Naive thymus-derived CD4-positive, alpha-beta T cell (primary cell): ENCODE measurements at regions of chr2 and their contacts with region 1.

Region 1: GRCh38 chr2:74458132-74458925 is at the start of gene WBP1:
- DNase-seq: peak in 8 of 9 donors; percentile 85 to 100 (median 100)
- ATAC-seq: peak; percentile 89
- H3K4me3 ChIP-seq: peak within 1 kb of the TSS; percentile 70
- H3K4me3 Mint-ChIP-seq: peak within 1 kb of the TSS; percentile 87 to 99 (median 96)
- H3K27ac ChIP-seq: peak within 1 kb of the TSS; percentile 100
- H3K27ac Mint-ChIP-seq: peak within 1 kb of the TSS; percentile 88 to 100 (median 99)
- H3K4me1 ChIP-seq: peaks cover 30 to 34% of the 10 kb centered on the region in 2 donors
- H3K4me1 Mint-ChIP-seq: peaks cover 38 to 68% (median 58%) of the 10 kb centered on the region in 7 donors
- H3K27me3 ChIP-seq: no peaks in the 10 kb centered on the region
- H3K27me3 Mint-ChIP-seq: peaks cover 0 to 2% (median 0%) of the 10 kb centered on the region in 5 donors
- total RNA-seq, gene WBP1: 53.6 to 127 (median 85.4) TPM

Region 2: GRCh38 chr2:73736855-73737779 is 721.2 kb before region 1 on chr2 and contains the start of gene TPRKB:
- CTCF ChIA-PET with region 1: no interaction called
- POLR2A ChIA-PET with region 1: interaction called, 7 read pairs
- intact Hi-C with region 1: loop called (anchors 1 kb)
- DNase-seq: peak; percentile 73 to 95 (median 94)
- ATAC-seq: peak; percentile 99
- H3K4me3 ChIP-seq: peak within 1 kb of the TSS; percentile 78
- H3K4me3 Mint-ChIP-seq: peak within 1 kb of the TSS; percentile 92 to 98 (median 98)
- H3K27ac ChIP-seq: peak within 1 kb of the TSS; percentile 67
- H3K27ac Mint-ChIP-seq: peak within 1 kb of the TSS; percentile 85 to 97 (median 91)
- H3K4me1 ChIP-seq: peaks cover 8 to 14% of the 10 kb centered on the region in 2 donors
- H3K4me1 Mint-ChIP-seq: peaks cover 10 to 31% (median 21%) of the 10 kb centered on the region in 7 donors
- H3K27me3 ChIP-seq: no peaks in the 10 kb centered on the region
- H3K27me3 Mint-ChIP-seq: peaks cover 0 to 2% (median 0%) of the 10 kb centered on the region in 5 donors
- total RNA-seq, gene TPRKB: 16.5 to 34.6 (median 27.5) TPM

Region 3: GRCh38 chr2:74178201-74179062 is 279.9 kb before region 1 on chr2 and contains the start of gene MOB1A:
- CTCF ChIA-PET with region 1: no interaction called
- POLR2A ChIA-PET with region 1: interaction called, 4 read pairs
- intact Hi-C with region 1: loop called in 1 of 2 experiments (anchors 1 kb)
- DNase-seq: peak; percentile 94 to 98 (median 97)
- ATAC-seq: peak; percentile 97
- H3K4me3 ChIP-seq: peak within 1 kb of the TSS; percentile 89
- H3K4me3 Mint-ChIP-seq: peak within 1 kb of the TSS; percentile 86 to 95 (median 91)
- H3K27ac ChIP-seq: peak within 1 kb of the TSS; percentile 97
- H3K27ac Mint-ChIP-seq: peak within 1 kb of the TSS; percentile 82 to 95 (median 90)
- H3K4me1 ChIP-seq: peaks cover 25 to 37% of the 10 kb centered on the region in 2 donors
- H3K4me1 Mint-ChIP-seq: peaks cover 32 to 46% (median 35%) of the 10 kb centered on the region in 7 donors
- H3K27me3 ChIP-seq: no peaks in the 10 kb centered on the region
- H3K27me3 Mint-ChIP-seq: no peaks in the 10 kb centered on the region
- total RNA-seq, gene MOB1A: 113 to 185 (median 140) TPM

Region 4: GRCh38 chr2:74421221-74421870 is 37.0 kb before region 1 on chr2 and contains the starts of genes C2orf81 and WDR54:
- CTCF ChIA-PET with region 1: no interaction called
- POLR2A ChIA-PET with region 1: interaction called, 23 read pairs
- intact Hi-C with region 1: loop called (anchors 1 kb)
- DNase-seq: peak; percentile 86 to 96 (median 95)
- ATAC-seq: peak; percentile 97
- H3K4me3 ChIP-seq: peak within 1 kb of the TSS; percentile 96
- H3K4me3 Mint-ChIP-seq: peak within 1 kb of the TSS; percentile 90 to 100 (median 98)
- H3K27ac ChIP-seq: peak within 1 kb of the TSS; percentile 97
- H3K27ac Mint-ChIP-seq: peak within 1 kb of the TSS; percentile 96 to 100 (median 99)
- H3K4me1 ChIP-seq: peaks cover 4 to 19% of the 10 kb centered on the region in 2 donors
- H3K4me1 Mint-ChIP-seq: peaks cover 14 to 44% (median 36%) of the 10 kb centered on the region in 7 donors
- H3K27me3 ChIP-seq: no peaks in the 10 kb centered on the region
- H3K27me3 Mint-ChIP-seq: no peaks in the 10 kb centered on the region
- total RNA-seq, gene C2orf81: 4.3 to 10.5 (median 6.8) TPM
- total RNA-seq, gene WDR54: 26.5 to 78.5 (median 30.8) TPM

Region 5: GRCh38 chr2:74482801-74483674 is 24.7 kb after region 1 on chr2 and contains the starts of genes CCDC142 and TTC31:
- CTCF ChIA-PET with region 1: interaction called, 30 read pairs
- POLR2A ChIA-PET with region 1: interaction called, 197 read pairs
- intact Hi-C with region 1: loop called (anchors 1 kb)
- DNase-seq: peak; percentile 76 to 96 (median 96)
- ATAC-seq: peak; percentile 96
- H3K4me3 ChIP-seq: peak within 1 kb of the TSS; percentile 99
- H3K4me3 Mint-ChIP-seq: peak within 1 kb of the TSS; percentile 91 to 100 (median 98)
- H3K27ac ChIP-seq: peak within 1 kb of the TSS; percentile 85
- H3K27ac Mint-ChIP-seq: peak within 1 kb of the TSS; percentile 93 to 100 (median 99)
- H3K4me1 ChIP-seq: peaks cover 22 to 26% of the 10 kb centered on the region in 2 donors
- H3K4me1 Mint-ChIP-seq: peaks cover 21 to 59% (median 41%) of the 10 kb centered on the region in 7 donors
- H3K27me3 ChIP-seq: no peaks in the 10 kb centered on the region
- H3K27me3 Mint-ChIP-seq: no peaks in the 10 kb centered on the region
- total RNA-seq, gene CCDC142: 21.4 to 75.2 (median 33.8) TPM
- total RNA-seq, gene TTC31: 35.5 to 50.4 (median 43.6) TPM

Region 6: DNA sequence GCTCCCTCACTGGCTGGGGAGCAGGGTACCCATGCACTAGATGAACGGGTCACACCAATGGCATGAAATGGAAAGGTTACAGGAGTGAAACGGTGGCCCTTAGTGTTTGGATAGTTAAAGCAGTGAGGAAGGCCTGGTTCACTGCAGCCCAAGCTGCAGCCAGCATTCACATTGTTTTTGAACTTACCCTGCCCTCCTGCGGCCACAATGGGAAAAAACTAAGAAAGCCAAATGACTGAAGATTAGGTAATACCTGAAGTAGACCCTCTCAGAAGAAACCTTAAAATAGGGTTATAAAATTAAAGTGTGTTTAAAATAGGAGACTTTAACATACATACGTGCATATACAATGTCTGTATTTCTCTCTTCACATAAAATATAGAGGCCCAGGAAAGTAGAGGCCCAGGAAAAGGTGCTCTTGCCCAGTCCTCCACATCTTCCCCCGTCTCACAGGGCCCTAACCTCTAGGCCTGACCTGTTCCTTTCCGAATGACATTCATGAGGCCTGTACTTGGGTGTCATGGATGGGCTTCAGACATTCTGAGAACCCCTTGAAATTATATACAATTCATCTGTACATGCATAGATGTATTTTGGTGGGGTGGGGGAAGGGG is 129.4 kb after region 1 on chr2:
- CTCF ChIA-PET with region 1: no interaction called
- POLR2A ChIA-PET with region 1: interaction called, 6 read pairs
- intact Hi-C with region 1: loop called (anchors 1 kb)
- DNase-seq: peak; percentile 27 to 74 (median 63)
- ATAC-seq: peak; percentile 85
- H3K4me3 ChIP-seq: no peak overlapping the region
- H3K4me3 Mint-ChIP-seq: no peak overlapping the region
- H3K27ac ChIP-seq: no peak overlapping the region
- H3K27ac Mint-ChIP-seq: peak overlapping the region in 1 of 9 donors; percentile 30
- H3K4me1 ChIP-seq: no peaks in the 10 kb centered on the region
- H3K4me1 Mint-ChIP-seq: peaks cover 8 to 35% (median 15%) of the 10 kb centered on the region in 7 donors
- H3K27me3 ChIP-seq: no peaks in the 10 kb centered on the region
- H3K27me3 Mint-ChIP-seq: peaks cover 8 to 26% (median 17%) of the 10 kb centered on the region in 5 donors